ENCODE measurements at regions of chr7 and their contacts with region 1.

Region 1: DNA sequence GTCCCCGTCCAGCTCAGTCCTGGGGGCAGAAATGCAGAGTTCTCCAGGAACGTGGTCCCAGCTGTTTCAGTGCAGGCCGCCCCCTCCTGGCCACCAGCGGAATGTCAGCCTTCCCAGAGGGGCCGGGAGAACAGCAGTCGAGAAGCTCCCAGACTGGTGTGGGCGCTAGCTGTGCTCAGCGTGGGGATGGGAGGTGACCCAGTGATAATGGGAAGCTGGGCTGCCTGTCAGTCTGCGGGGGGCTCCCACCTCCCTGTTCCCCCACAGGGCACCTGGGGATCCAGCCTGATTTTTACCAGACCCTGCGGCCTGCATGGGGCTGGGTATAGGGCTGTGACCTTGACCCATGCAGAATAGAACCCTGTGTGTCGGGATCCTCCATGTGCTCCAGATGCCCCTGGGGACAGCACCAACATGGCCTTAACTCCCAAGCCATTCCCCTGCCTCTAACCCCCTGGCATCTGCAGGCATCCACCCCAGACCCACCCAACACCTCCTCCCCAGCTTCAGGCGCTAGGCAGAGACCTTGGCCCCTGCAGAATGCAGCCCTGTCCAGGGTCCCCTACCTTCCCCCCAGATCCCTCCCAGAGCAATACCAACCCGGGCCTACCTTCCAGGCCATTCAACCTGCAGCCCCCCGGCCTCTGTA is 946 bp upstream of the ELN start:
- DNase-seq: peak; percentile 90
- ATAC-seq: peak; percentile 73
- H3K4me3 Mint-ChIP-seq: no peak overlapping the region
- H3K27ac Mint-ChIP-seq: no peak overlapping the region
- H3K4me1 Mint-ChIP-seq: peaks cover 36% of the 10 kb centered on the region
- H3K27me3 Mint-ChIP-seq: peaks cover 10% of the 10 kb centered on the region
- CTCF ChIP-seq: peak; percentile 90

Region 2: DNA sequence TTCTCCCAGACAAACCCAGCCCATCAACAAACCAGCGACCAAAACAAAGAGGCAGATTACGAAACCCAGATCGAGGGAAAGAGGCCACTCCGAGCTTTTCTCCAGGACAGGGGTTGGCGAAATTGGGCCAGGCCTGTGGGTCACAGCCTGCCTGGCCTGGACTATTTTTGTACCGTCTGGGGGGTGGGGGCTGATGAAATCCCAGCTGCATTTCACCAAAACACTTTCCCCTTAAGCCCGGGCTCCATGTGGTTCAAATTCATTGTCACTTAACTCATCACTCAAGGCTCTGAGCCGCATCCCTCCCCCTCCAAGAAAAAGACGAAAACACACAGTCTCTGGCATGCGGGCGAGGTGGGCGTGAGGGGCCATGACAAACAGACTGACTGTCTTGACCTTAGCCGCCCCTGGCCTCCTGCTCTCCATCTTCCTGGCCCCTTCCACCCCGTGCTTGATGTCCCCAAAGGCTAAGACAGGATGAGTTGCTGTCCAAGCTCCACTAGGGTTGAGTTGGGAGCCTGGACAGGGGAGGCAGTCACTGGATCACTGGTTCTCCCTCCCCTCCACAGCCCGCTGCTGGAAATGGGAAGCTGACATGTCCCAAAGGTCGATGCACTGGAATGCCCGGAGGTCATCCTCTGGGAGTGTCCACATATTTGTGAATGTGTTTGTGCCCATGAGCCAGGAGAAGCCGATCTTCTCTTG is 146.9 kb before region 1 on chr7:
- CTCF ChIA-PET with region 1: interaction called, 17 read pairs
- POLR2A ChIA-PET with region 1: no interaction called
- DNase-seq: no peak
- ATAC-seq: no peak
- H3K4me3 Mint-ChIP-seq: no peak overlapping the region
- H3K27ac Mint-ChIP-seq: no peak overlapping the region
- H3K4me1 Mint-ChIP-seq: no peaks in the 10 kb centered on the region
- H3K27me3 Mint-ChIP-seq: no peaks in the 10 kb centered on the region
- CTCF ChIP-seq: no peak

Region 3: DNA sequence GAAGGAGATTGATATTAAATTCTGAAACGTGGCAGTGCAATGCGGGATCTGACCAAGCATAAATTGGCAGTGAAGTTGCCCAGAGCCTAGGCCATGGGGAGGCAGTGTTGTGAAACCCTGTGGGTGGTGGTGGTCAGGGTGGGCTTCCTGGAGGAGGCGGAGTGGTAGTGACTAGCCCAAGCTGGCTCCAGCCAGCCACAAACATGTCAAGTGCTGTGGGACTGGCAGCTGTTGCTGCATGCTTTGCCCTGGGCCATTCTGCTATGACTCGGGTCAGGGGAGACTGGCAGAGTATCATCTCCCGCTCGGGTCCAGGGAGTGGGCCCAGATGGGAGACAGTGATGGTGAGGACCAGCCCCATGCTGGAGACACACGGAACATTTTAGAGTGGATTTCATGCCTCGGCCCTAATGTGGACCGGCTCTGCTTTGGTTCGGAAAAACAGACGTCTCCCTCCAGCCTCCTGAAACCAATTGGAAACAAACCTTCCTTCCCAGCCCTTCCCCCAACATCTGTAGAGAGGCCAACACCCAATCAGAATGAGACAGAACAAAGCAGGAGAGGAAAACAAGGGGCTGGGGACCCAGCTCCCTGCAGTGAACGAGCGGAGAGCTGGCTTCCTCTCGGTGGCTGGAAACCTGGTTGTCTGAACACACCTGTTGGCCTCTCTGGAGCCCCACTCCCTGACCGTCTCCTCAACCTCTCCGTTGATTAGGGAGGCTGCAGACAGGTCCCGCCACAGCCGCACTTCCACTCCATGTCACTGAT is 107.9 kb before region 1 on chr7:
- CTCF ChIA-PET with region 1: interaction called, 14 read pairs
- POLR2A ChIA-PET with region 1: no interaction called
- DNase-seq: peak; percentile 55
- ATAC-seq: peak; percentile 93
- H3K4me3 Mint-ChIP-seq: peak overlapping the region; percentile 29
- H3K27ac Mint-ChIP-seq: peak overlapping the region; percentile 89
- H3K4me1 Mint-ChIP-seq: peaks cover 35% of the 10 kb centered on the region
- H3K27me3 Mint-ChIP-seq: no peaks in the 10 kb centered on the region
- CTCF ChIP-seq: no peak

Region 4: DNA sequence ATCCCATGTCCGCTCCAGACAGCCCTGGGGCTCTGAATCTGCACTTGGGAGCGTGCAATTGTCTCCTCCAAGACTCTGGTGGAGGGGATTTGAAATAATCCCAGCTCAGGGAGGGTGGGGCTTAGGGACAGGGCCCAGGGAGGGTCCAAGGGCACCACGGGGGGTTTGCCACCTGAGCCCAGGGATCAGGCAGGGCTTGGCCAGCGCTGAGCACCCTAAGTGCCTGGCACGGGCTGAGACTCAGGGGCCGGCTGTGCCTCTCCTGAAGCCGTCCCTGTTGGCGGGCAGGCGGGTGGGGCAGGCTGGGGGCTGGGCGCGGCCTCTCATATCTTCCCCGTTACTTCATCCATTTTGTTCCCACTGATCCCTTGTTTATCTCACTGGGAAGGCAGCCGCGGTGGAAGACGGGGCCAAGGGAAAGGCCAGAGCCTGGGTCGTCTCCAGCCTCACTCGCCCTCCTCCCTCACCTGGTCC is 40.8 kb before region 1 on chr7:
- CTCF ChIA-PET with region 1: interaction called, 15 read pairs
- POLR2A ChIA-PET with region 1: no interaction called
- DNase-seq: no peak
- ATAC-seq: no peak
- H3K4me3 Mint-ChIP-seq: no peak overlapping the region
- H3K27ac Mint-ChIP-seq: no peak overlapping the region
- H3K4me1 Mint-ChIP-seq: no peaks in the 10 kb centered on the region
- H3K27me3 Mint-ChIP-seq: no peaks in the 10 kb centered on the region
- CTCF ChIP-seq: no peak

Region 5: DNA sequence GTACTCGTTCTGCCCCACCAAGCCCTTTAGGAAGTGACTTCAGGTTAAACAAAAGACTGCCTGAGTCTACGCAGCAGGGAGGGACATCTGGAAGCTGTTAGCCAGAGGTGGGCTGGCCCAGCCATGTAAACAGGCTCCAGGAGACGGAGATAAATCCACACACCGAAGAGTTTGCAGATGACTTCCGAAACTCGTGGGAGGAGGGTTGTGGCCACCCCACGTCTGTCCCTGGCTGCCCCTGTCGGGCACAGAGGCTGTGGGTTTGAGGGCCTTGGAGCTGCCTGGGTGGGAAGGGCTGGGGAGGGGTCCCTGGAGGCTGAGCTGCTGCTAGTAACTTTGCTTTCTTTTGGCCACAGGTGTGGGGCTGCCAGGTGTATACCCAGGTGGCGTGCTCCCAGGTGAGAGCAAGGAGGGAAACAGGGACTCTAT is 16.5 kb after region 1 on chr7:
- CTCF ChIA-PET with region 1: interaction called, 122 read pairs
- POLR2A ChIA-PET with region 1: no interaction called
- DNase-seq: peak; percentile 50
- ATAC-seq: peak; percentile 77
- H3K4me3 Mint-ChIP-seq: peak overlapping the region; percentile 45; the same call in 1 of the 2 replicates
- H3K27ac Mint-ChIP-seq: peak overlapping the region; percentile 84; the same call in 1 of the 2 replicates
- H3K4me1 Mint-ChIP-seq: peaks cover 48% of the 10 kb centered on the region
- H3K27me3 Mint-ChIP-seq: no peaks in the 10 kb centered on the region
- CTCF ChIP-seq: no peak

Region 6: DNA sequence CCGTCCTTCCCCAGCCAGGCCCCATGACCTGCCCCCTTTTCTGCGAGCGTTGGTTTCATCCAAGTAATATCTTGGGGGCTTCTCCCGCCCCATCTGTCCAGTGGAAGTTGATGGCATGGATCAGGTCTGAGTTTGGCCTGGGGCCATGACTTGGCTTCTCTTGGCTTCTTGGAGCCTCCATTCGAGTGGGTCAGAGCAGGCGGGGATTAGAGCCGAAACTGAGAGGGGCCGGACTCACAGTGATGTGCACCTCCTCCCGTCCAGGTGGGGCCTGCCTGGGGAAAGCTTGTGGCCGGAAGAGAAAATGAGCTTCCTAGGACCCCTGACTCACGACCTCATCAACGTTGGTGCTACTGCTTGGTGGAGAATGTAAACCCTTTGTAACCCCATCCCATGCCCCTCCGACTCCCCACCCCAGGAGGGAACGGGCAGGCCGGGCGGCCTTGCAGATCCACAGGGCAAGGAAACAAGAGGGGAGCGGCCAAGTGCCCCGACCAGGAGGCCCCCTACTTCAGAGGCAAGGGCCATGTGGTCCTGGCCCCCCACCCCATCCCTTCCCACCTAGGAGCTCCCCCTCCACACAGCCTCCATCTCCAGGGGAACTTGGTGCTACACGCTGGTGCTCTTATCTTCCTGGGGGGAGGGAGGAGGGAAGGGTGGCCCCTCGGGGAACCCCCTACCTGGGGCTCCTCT is 41.5 kb after region 1 on chr7:
- CTCF ChIA-PET with region 1: interaction called, 10 read pairs
- POLR2A ChIA-PET with region 1: no interaction called
- DNase-seq: no peak
- ATAC-seq: no peak
- H3K4me3 Mint-ChIP-seq: no peak overlapping the region
- H3K27ac Mint-ChIP-seq: no peak overlapping the region
- H3K4me1 Mint-ChIP-seq: 0 out of 2 replicates have a peak, but pooled peaks cover 2% of the 10 kb centered on the region
- H3K27me3 Mint-ChIP-seq: no peaks in the 10 kb centered on the region; the same call in 1 of the 2 replicates
- CTCF ChIP-seq: no peak

Region 7: DNA sequence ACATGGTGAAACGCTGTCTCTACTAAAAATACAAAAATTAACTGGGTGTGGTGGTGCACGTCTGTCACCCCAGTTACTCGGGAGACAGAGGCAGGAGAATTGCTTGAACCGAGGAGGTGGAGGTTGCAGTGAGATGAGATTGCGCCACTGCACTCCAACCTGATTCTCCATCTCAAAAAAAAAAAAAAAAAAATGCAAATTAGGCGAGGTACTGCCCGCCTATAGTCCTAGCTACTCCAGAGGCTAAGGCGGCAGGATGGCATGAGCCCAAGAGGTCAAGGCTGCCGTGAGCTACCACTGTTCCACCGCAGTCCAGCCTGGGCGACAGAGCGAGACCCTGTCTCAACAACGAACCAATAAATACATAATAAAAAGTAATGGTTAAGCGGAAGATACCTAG is 146.0 kb after region 1 on chr7:
- CTCF ChIA-PET with region 1: no interaction called
- POLR2A ChIA-PET with region 1: no interaction called
- DNase-seq: no peak
- ATAC-seq: peak; percentile 47
- H3K4me3 Mint-ChIP-seq: peak overlapping the region; percentile 83
- H3K27ac Mint-ChIP-seq: peak overlapping the region; percentile 93
- H3K4me1 Mint-ChIP-seq: peaks cover 41% of the 10 kb centered on the region
- H3K27me3 Mint-ChIP-seq: no peaks in the 10 kb centered on the region
- CTCF ChIP-seq: no peak

Measured in WTC11 (cell line).